WTC11 (cell line): ENCODE measurements at regions of chr12 and their contacts with region 1.

Region 1: GRCh38 chr12:95217377-95218149 is at the starts of genes FGD6 and VEZT:
- DNase-seq: peak; percentile 99
- ATAC-seq: peak; percentile 92
- H3K4me3 Mint-ChIP-seq: peak within 1 kb of the TSS; percentile 97
- H3K27ac Mint-ChIP-seq: peak within 1 kb of the TSS; percentile 100
- H3K4me1 Mint-ChIP-seq: peaks cover 51% of the 10 kb centered on the region
- H3K27me3 Mint-ChIP-seq: no peaks in the 10 kb centered on the region
- CTCF ChIP-seq: no peak
- total RNA-seq, gene FGD6: 24.2 to 28.2 TPM (median 24.4 TPM) in 3 replicates
- total RNA-seq, gene VEZT: 51.5 to 54.5 TPM (median 53.9 TPM) in 3 replicates

Region 2: DNA sequence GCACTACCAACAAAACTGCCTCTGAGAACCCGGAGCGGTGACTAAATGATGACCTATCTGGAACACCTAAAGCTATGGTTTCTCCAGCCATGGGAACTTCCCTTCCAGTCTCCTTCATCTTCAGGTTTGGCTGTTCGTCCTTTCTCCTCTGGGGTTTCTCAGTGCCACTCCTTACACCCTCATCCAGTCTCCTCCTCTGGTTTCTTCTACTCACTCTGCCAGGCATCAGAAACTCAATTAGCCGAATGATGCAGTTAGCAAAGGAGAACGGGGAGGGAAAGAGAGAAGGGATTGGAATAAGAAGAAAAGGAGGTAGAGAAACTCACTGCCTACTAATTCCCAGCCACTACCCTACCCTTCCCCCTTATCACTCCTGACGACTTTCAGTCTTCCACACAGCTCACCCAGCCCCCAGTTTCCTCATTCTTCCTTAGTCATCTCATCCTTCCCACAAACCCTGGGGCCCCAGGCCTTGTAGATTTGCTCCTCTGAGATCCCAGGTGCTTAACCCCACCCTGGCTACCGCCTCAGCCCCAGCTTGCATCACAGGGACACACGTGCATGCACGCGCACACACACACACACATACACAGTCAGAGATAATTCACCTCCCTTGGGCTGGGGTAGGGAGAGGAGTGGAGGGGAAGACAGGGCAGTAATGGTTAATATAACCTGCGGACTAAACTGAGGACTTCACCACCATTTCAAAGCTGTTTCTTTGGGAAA is 13.3 kb before region 1 on chr12:
- CTCF ChIA-PET with region 1: interaction called, 4 read pairs
- POLR2A ChIA-PET with region 1: interaction called, 24 read pairs
- DNase-seq: peak; percentile 41
- ATAC-seq: peak; percentile 76
- H3K4me3 Mint-ChIP-seq: peak overlapping the region; percentile 38; the same call in 1 of the 2 replicates
- H3K27ac Mint-ChIP-seq: peak overlapping the region; percentile 99
- H3K4me1 Mint-ChIP-seq: peaks cover 89% of the 10 kb centered on the region
- H3K27me3 Mint-ChIP-seq: no peaks in the 10 kb centered on the region
- CTCF ChIP-seq: no peak